Activated CD8-positive, alpha-beta memory T cell treated with anti-CD3 and anti-CD28 coated beads, Interleukin-2, amount 10 ng/mL, durations not matched to agents 7 days and 5 days (primary cell): ENCODE measurements at regions of chr5 and their contacts with region 1.

Region 1: DNA sequence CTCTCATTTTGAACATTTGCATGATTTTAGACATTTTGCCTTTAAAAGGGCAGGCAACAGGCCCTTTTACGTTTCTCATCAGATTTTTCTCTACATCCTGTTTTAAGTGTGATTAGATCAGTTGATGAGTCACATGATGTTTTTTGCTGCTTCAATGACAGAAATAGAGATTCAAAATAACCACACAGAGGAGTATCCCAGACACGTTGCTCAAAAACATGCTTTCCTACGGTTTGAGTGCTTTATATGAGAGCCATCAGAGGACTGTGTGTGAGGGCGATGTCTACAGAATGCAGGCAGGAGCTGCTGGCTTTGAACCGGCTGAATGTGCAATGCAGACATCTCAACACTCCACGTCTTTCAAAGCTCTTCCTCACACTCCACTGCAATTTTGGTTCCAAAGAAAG is 42.1 kb downstream of the OTULIN start:
- DNase-seq: peak; percentile 59
- ATAC-seq: peak; percentile 94
- H3K4me3 Mint-ChIP-seq: peak overlapping the region; percentile 61
- H3K27ac Mint-ChIP-seq: peak overlapping the region; percentile 96
- H3K4me1 Mint-ChIP-seq: peaks cover 73% of the 10 kb centered on the region
- H3K27me3 Mint-ChIP-seq: no peaks in the 10 kb centered on the region

Region 2: DNA sequence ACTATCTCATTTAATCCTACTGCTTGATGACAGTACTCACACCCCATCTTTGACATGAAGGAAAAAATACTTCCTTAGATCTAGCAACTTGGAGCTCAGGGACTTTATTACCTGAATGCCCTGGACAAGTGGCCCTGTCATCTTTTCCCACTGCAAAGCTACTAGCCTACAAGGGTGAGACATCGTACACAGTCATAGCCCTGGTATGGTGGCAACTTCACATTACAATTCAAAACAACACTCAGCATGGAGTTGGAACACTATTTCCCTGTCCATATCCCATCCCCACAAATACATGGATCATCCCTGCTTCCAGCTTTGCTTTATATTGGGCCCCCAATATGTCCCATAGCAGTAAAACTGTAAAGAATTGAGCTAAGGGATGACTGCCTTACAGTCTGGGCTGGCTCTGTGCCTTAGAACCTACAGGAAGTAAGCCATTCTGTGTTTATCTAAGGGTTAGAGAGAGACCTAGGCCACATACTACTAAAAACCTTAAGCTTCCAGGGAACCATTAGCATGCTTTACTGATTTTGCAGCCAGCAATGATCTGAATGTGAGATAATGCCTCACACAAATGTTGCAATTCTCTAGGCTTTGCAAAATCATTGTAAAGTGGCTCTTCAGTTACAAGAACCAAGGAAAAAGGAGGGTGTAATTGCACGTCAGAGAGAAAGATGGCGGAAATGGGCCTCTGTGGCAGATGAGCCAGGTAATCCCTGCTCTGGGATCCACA is 13.8 kb after region 1 on chr5:
- CTCF ChIA-PET with region 1: interaction called, 11 read pairs
- DNase-seq: no peak
- ATAC-seq: no peak
- H3K4me3 Mint-ChIP-seq: no peak overlapping the region
- H3K27ac Mint-ChIP-seq: no peak overlapping the region
- H3K4me1 Mint-ChIP-seq: peaks cover 6% of the 10 kb centered on the region
- H3K27me3 Mint-ChIP-seq: no peaks in the 10 kb centered on the region

Region 3: GRCh38 chr5:14753912-14754311 is 47.3 kb after region 1 on chr5:
- CTCF ChIA-PET with region 1: no interaction called
- DNase-seq: no peak
- ATAC-seq: no peak
- H3K4me3 Mint-ChIP-seq: no peak overlapping the region
- H3K27ac Mint-ChIP-seq: no peak overlapping the region
- H3K4me1 Mint-ChIP-seq: no peaks in the 10 kb centered on the region
- H3K27me3 Mint-ChIP-seq: no peaks in the 10 kb centered on the region